Endothelial cell of umbilical vein (primary cell): ENCODE measurements at regions of chr2 and their contacts with region 1.

Region 1: DNA sequence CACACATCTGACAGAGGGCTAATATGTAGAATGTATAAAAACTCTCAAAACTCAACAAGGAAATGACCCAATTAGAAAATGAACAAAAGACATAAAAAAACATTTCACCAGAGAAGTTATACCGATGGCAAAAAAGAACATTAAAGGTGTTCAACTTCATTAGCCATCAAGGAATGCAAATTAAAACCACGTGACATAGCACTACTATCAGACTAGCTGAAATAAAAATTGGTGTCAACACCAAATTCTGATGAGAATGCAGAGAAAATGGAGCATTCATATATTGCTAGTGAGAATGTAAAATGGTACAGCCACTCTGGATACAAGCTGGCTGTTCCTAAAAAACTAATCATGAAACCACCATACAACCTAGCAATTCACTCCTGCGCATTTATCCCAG is 128.0 kb downstream of the INSIG2 start:
- DNase-seq: no peak
- H3K4me3 ChIP-seq: no peak overlapping the region
- H3K27ac ChIP-seq: no peak overlapping the region
- H3K4me1 ChIP-seq: no peaks in the 10 kb centered on the region
- H3K27me3 ChIP-seq: peaks cover 3 to 21% of the 10 kb centered on the region in 2 experiments
- CTCF ChIP-seq: no peak
- POLR2A ChIP-seq: no peak

Region 2: GRCh38 chr2:117686699-117687098 is 529.5 kb before region 1 on chr2:
- CTCF ChIA-PET with region 1: no interaction called
- POLR2A ChIA-PET with region 1: no interaction called
- dilution Hi-C with region 1: no loop called
- intact Hi-C with region 1: no loop called
- DNase-seq: no peak
- H3K4me3 ChIP-seq: no peak overlapping the region
- H3K27ac ChIP-seq: no peak overlapping the region
- H3K4me1 ChIP-seq: no peaks in the 10 kb centered on the region
- H3K27me3 ChIP-seq: no peaks in the 10 kb centered on the region
- CTCF ChIP-seq: no peak
- POLR2A ChIP-seq: no peak

Region 3: DNA sequence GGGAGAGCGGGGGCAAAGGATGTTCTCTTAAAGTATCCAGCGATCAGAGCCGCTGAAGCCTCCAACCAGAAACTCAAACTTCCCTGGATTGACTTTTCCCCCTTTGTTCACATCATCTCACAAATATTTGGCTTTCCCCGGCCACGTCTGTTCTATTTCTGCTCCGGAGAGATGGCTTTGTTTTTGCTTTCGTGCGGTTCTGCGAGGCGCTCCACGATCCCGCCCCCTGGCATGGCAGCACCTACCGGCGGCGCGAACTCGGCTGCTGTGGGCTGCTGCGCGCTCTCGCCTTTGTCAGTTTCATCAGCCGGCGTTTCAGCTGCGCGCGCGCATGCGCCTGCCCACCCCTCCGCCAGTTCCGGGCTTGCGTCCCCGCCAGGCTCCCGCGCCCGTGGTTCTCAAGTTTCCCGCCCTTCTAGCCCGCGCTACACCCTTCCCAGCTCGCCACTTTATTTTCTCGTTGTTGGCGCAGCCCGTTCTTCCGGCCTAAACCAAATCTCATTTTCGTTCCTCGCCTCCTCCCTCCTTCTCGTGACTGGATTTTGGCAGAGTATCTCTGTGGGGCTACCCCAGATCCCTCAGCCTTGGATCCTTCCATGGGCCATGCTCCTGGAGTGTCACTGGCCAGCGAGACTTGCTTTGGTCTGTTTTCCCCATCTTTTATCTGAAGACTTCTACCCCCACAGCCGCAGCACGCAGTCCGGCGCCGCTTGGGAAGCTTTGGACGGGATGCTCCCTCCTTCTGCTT is 29.9 kb before region 1 on chr2:
- CTCF ChIA-PET with region 1: no interaction called
- POLR2A ChIA-PET with region 1: no interaction called
- dilution Hi-C with region 1: no loop called
- intact Hi-C with region 1: no loop called
- DNase-seq: peak; percentile 80
- H3K4me3 ChIP-seq: peak overlapping the region; percentile 51 to 76 (median 60)
- H3K27ac ChIP-seq: peak overlapping the region; percentile 46
- H3K4me1 ChIP-seq: peaks cover 3% of the 10 kb centered on the region
- H3K27me3 ChIP-seq: peaks cover 2 to 13% of the 10 kb centered on the region in 2 experiments
- CTCF ChIP-seq: peak in 1 of 2 donors; percentile 11
- POLR2A ChIP-seq: peak; percentile 77

Region 4: DNA sequence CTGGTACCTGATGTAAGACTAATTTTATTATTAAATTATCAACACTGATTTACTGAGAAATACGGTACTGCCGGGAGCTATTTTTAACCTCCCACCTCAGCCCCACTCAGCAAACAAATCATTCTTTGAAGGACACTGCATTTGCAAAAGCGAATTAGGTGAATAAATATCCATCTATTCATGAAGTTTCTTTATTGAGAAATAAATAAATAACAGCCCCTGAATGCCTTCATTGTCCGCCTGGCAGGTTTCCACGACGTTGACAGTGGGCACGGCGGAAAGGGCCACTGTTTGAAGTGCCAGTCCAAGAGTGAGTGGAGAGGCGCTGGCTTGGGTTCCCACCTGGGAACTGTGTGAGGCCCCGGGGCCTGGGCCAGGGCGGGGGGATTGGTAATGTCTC is 926.6 kb after region 1 on chr2:
- CTCF ChIA-PET with region 1: no interaction called
- POLR2A ChIA-PET with region 1: interaction called, 10 read pairs
- dilution Hi-C with region 1: no loop called
- intact Hi-C with region 1: no loop called
- DNase-seq: no peak
- H3K4me3 ChIP-seq: no peak overlapping the region
- H3K27ac ChIP-seq: no peak overlapping the region
- H3K4me1 ChIP-seq: no peaks in the 10 kb centered on the region
- H3K27me3 ChIP-seq: no peaks in the 10 kb centered on the region
- CTCF ChIP-seq: no peak
- POLR2A ChIP-seq: no peak